ENCODE measurements at regions of chrX and their contacts with region 1.

Region 1: DNA sequence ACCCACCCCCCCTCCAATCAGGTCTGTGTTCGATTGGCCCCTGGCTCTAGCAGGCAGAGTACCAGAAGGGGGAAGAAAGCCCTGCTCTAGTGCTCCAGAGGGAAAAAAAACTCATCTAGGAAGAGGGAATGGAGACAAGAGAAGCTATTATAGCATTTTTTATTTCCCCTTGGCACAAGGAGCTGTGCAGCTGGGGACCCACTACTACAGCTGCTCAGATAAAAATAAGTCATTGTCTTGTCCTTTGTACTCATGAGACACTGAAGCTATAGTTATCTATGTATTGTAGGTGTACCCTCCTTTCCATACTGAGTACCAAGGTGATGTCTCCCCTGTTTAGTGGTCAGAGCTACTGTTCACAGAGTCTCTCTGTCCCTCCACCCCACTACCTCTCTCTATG is 14.3 kb downstream of the CCDC160 start:
- DNase-seq: no peak
- H3K4me3 ChIP-seq: no peak overlapping the region
- H3K27ac ChIP-seq: no peak overlapping the region
- H3K4me1 ChIP-seq: no peaks in the 10 kb centered on the region
- H3K27me3 ChIP-seq: no peaks in the 10 kb centered on the region
- CTCF ChIP-seq: no peak
- POLR2A ChIP-seq: no peak

Region 2: DNA sequence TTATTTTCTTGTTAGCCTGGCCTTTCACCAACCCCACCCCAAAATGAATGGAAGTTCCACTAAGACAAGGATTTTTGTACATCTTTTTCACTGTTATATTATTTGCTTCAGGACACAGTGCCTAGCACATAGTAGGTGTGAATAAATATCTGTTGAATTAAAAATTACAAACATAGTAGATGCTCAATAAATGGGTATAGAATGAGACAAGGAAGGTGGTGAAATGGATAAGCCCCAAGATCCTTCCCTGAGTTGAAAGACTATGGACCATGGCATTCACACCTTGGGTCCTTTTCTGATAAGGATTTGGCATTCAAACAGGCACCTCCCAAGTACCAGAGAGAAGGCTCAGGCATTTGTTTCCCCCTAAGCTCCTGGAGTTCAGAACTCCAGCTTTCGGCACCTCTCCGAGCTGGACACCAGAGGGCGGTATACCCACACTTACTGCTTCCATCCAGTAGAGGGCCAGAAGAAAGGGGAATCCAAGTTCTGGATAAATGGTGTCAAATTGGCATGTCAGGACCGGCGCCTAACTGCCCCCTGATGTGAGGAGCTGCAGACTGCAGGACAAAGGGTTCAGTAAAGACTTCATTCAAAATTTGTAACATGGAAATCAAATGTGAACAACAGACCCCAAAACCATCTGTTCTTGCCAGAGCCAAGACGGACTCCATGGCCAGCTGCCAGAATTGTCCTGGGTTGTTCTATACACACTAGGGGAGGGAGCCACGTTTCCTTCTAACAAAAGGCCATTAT is 458.9 kb before region 1 on chrX:
- intact Hi-C with region 1: loop called (anchors 10 kb)
- DNase-seq: peak; percentile 78
- H3K4me3 ChIP-seq: peak overlapping the region in 1 of 8 donors; percentile 34
- H3K27ac ChIP-seq: no peak overlapping the region
- H3K4me1 ChIP-seq: no peaks in the 10 kb centered on the region
- H3K27me3 ChIP-seq: peaks cover 0 to 9% (median 0%) of the 10 kb centered on the region in 7 donors
- CTCF ChIP-seq: peak; percentile 48 to 91 (median 77)
- POLR2A ChIP-seq: no peak